Head of caudate nucleus (tissue), 42 donors: ENCODE measurements at regions of chr10 and their contacts with region 1.

Region 1: GRCh38 chr10:79221110-79222051 is 125.9 kb upstream of the PPIF start:
- DNase-seq: peak in 39 of 42 donors; percentile 41 to 83 (median 64)

Region 2: DNA sequence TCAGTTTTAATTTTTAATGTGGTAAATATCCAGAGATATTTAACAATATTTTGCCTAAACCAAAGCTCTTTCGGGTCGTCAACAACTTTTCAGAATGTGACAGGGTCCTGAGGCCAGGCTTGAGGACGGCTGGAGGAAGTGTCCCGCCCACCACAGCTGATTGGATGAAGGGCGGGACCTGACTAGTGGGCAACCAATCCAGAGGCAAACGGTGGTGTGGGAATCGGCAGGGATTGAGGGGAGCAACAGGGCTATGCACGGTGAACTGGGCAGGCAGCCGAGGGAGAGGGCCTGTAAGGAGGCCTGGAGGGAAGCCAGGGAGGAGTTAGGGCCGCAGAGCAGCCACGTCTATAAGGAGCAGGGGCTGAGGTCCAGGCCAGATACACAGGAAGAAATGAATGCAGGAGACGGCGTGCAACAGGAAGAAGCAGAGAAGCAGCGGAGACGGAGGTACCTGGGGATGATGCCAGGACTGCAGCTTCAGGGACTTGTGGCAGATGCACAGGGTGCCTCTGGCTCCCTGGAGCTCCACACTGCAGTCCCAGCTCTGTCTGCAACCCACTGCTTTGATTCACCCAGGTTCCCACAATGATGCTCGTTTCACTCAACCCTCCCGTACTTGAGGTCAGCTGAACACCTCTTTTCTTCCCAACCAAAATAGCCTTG is 198.7 kb before region 1 on chr10:
- intact Hi-C with region 1: no loop called
- DNase-seq: peak in 17 of 42 donors; percentile 13 to 65 (median 33)

Region 3: DNA sequence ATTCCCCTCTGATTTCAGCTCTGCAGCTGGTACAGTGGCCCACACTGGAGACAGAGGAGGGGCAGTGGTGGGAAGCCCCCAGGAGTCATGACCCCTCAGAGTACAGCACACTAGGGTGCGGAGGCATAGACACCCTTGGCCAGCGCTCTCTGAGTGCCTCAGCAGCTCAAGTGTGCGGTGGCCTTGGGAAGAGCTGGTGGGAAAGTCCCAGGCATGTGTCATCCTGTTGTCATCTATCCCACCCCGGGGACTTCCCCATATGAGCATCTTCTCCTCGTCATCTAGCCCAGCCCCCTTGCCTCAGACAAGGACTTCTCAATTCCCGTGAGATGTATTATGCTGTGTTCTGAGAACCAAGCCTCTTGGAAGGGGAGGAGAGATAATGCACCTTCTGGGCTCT is 110.3 kb after region 1 on chr10:
- intact Hi-C with region 1: loop called (anchors 10 kb)
- DNase-seq: peak in 1 of 42 donors; percentile 36

Region 4: DNA sequence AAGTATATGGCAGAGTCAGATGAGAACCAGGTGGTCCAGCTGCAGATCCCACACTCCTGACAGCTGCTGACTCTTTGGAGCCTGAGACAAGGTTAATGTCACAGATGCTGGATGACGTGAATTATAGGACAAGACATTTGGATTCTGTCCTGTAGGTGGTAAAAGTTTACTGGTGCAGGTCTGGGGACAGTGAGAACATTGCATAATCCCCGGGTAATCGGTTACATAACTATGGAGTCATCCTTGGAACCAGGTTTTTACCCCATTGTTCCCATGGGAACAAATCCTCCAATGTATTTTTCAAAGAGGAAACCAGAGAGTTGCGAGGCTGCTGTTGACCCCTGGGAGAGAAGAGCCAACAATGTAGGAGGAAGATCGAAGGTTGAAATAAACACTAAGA is 251.6 kb after region 1 on chr10:
- intact Hi-C with region 1: no loop called
- DNase-seq: peak in 7 of 42 donors; percentile 26 to 70 (median 47)

Region 5: DNA sequence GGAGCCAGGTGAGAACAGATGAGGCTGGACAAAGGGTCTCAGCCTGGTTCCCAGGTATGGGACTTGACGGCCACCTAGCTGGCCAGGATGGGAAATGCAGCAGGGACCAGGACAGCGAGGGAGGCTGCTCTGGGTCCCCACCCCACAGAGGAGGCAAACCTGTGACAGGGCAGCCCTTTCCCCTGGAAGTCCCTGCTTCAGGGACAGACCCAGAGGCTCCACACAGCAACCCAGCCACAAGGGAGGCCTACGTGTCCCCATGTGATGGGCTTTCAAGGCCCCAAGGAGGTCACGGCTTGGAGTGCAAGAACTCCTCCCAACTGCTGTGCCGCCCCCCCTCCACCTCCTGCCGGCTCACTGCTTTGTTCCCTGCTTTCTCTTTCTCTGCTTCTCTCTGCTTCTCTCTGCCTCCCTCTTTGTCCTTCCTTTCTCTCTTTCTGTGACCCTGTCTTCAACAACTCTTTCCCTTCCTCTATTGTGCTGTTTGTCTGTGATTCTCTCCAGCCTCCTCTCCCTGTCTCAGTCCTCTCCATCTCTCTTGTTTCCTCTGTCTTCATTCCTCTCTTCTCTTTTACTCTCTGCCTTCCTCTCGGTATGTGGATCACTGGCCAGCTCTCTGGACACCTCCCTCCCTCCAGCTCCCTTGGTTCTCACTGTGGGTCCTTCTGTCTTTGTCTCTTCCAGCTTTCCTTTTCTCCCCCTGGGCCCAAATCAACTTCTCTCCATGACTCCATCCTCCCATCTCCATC is 281.4 kb after region 1 on chr10:
- intact Hi-C with region 1: no loop called
- DNase-seq: no peak